CD8-positive, alpha-beta T cell (primary cell): ENCODE measurements at regions of chr18 and their contacts with region 1.

Region 1: GRCh38 chr18:58768293-58768974 is 96.2 kb upstream of the ZNF532 start:
- DNase-seq: peak; percentile 34 to 77 (median 64)
- ATAC-seq: peak; percentile 78
- H3K4me3 ChIP-seq: no peak overlapping the region
- H3K4me3 Mint-ChIP-seq: peak overlapping the region; percentile 57
- H3K27ac ChIP-seq: no peak overlapping the region
- H3K27ac Mint-ChIP-seq: no peak overlapping the region
- H3K4me1 ChIP-seq: peaks cover 13% of the 10 kb centered on the region
- H3K4me1 Mint-ChIP-seq: peaks cover 11% of the 10 kb centered on the region
- H3K27me3 ChIP-seq: peaks cover 0 to 4% of the 10 kb centered on the region in 2 experiments
- H3K27me3 Mint-ChIP-seq: peaks cover 41% of the 10 kb centered on the region
- CTCF ChIP-seq: peak; percentile 42

Region 2: GRCh38 chr18:58493516-58494253 is 274.7 kb before region 1 on chr18:
- CTCF ChIA-PET with region 1: interaction called, 27 read pairs
- POLR2A ChIA-PET with region 1: interaction called, 5 read pairs
- intact Hi-C with region 1: no loop called
- DNase-seq: peak; percentile 26 to 78 (median 66)
- ATAC-seq: peak; percentile 85
- H3K4me3 ChIP-seq: no peak overlapping the region
- H3K4me3 Mint-ChIP-seq: no peak overlapping the region
- H3K27ac ChIP-seq: no peak overlapping the region
- H3K27ac Mint-ChIP-seq: no peak overlapping the region
- H3K4me1 ChIP-seq: no peaks in the 10 kb centered on the region
- H3K4me1 Mint-ChIP-seq: peaks cover 8% of the 10 kb centered on the region
- H3K27me3 ChIP-seq: no peaks in the 10 kb centered on the region
- H3K27me3 Mint-ChIP-seq: peaks cover 32% of the 10 kb centered on the region
- CTCF ChIP-seq: peak; percentile 71

Region 3: GRCh38 chr18:58515175-58515775 is 253.2 kb before region 1 on chr18:
- CTCF ChIA-PET with region 1: interaction called, 21 read pairs
- POLR2A ChIA-PET with region 1: no interaction called
- intact Hi-C with region 1: no loop called
- DNase-seq: peak in 1 of 9 experiments; percentile 32
- ATAC-seq: no peak
- H3K4me3 ChIP-seq: no peak overlapping the region
- H3K4me3 Mint-ChIP-seq: no peak overlapping the region
- H3K27ac ChIP-seq: no peak overlapping the region
- H3K27ac Mint-ChIP-seq: no peak overlapping the region
- H3K4me1 ChIP-seq: no peaks in the 10 kb centered on the region
- H3K4me1 Mint-ChIP-seq: no peaks in the 10 kb centered on the region
- H3K27me3 ChIP-seq: peaks cover 0 to 8% of the 10 kb centered on the region in 2 experiments
- H3K27me3 Mint-ChIP-seq: peaks cover 11% of the 10 kb centered on the region
- CTCF ChIP-seq: no peak

Region 4: DNA sequence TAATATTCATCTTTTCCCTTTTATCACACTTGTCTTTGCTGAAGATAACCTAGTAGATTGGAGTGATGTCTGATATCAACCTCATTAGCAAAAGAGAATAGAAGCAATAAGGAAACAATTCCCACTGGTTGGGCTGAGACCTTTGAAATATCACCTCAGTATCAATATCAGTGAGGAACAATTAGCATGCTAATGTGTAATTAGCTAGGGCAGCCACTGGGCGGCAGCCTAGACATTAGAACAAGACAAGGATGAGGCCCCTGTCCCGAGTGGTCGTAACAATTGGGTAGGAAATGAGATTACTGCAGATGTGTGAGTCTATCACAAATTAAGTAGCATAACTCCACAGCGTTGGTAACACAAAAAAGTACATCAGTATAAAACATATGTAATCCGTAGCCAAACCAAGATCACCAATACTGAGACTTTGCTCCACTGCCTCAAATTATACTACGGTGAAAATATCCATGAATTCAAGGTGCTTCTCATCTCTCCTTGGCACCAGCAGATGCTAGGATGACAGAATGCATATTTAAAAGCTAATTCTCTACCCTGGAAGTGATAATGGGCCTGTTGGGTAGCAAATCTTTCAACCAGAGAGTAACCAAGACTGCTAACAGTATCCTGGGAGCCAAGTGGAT is 238.6 kb before region 1 on chr18:
- CTCF ChIA-PET with region 1: interaction called, 606 read pairs
- POLR2A ChIA-PET with region 1: interaction called, 29 read pairs
- intact Hi-C with region 1: loop called (anchors 1 kb)
- DNase-seq: peak; percentile 40 to 82 (median 72)
- ATAC-seq: peak; percentile 95
- H3K4me3 ChIP-seq: no peak overlapping the region
- H3K4me3 Mint-ChIP-seq: no peak overlapping the region
- H3K27ac ChIP-seq: no peak overlapping the region
- H3K27ac Mint-ChIP-seq: no peak overlapping the region
- H3K4me1 ChIP-seq: no peaks in the 10 kb centered on the region
- H3K4me1 Mint-ChIP-seq: peaks cover 4% of the 10 kb centered on the region
- H3K27me3 ChIP-seq: no peaks in the 10 kb centered on the region
- H3K27me3 Mint-ChIP-seq: peaks cover 7% of the 10 kb centered on the region
- CTCF ChIP-seq: peak; percentile 95

Region 5: GRCh38 chr18:58661423-58661822 is 107.0 kb before region 1 on chr18:
- CTCF ChIA-PET with region 1: interaction called, 11 read pairs
- POLR2A ChIA-PET with region 1: no interaction called
- intact Hi-C with region 1: no loop called
- DNase-seq: no peak
- ATAC-seq: no peak
- H3K4me3 ChIP-seq: no peak overlapping the region
- H3K4me3 Mint-ChIP-seq: no peak overlapping the region
- H3K27ac ChIP-seq: no peak overlapping the region
- H3K27ac Mint-ChIP-seq: no peak overlapping the region
- H3K4me1 ChIP-seq: peaks cover 28% of the 10 kb centered on the region
- H3K4me1 Mint-ChIP-seq: peaks cover 47% of the 10 kb centered on the region
- H3K27me3 ChIP-seq: no peaks in the 10 kb centered on the region
- H3K27me3 Mint-ChIP-seq: no peaks in the 10 kb centered on the region
- CTCF ChIP-seq: no peak

Region 6: DNA sequence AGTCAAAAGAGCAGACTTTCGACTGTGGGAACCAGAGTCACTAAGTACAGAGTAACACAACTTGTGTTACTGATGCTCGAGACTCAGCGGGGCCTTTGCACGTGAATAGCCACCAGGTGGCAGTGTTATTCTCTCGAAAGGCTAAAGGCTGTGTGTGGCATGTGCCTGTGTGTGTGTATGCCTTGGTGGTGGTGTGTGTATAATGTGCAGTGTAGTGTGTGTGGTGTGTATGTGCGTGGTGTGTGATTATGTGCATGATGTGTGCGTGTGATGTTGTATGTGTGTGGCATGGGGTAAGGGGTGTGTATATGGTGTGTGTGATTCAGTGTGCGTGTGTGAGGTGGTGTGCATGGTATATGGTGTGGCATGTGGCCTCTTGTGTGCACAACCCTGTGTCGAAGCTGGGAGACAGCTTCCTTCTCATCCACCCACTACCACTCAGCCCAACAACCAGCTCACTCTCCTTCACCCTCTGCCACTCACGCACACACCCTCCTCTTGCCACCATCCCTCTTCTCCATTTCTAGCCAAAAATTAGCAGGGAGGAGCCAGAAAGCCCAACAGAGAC is 13.3 kb after region 1 on chr18:
- CTCF ChIA-PET with region 1: interaction called, 15 read pairs
- POLR2A ChIA-PET with region 1: no interaction called
- intact Hi-C with region 1: no loop called
- DNase-seq: peak; percentile 25 to 76 (median 59)
- ATAC-seq: peak; percentile 61
- H3K4me3 ChIP-seq: no peak overlapping the region
- H3K4me3 Mint-ChIP-seq: no peak overlapping the region
- H3K27ac ChIP-seq: no peak overlapping the region
- H3K27ac Mint-ChIP-seq: no peak overlapping the region
- H3K4me1 ChIP-seq: no peaks in the 10 kb centered on the region
- H3K4me1 Mint-ChIP-seq: no peaks in the 10 kb centered on the region
- H3K27me3 ChIP-seq: peaks cover 0 to 2% of the 10 kb centered on the region in 2 experiments
- H3K27me3 Mint-ChIP-seq: peaks cover 32% of the 10 kb centered on the region
- CTCF ChIP-seq: peak; percentile 76

Region 7: GRCh38 chr18:58842978-58843687 is 74.7 kb after region 1 on chr18:
- CTCF ChIA-PET with region 1: no interaction called
- POLR2A ChIA-PET with region 1: no interaction called
- intact Hi-C with region 1: no loop called
- DNase-seq: no peak
- ATAC-seq: no peak
- H3K4me3 ChIP-seq: no peak overlapping the region
- H3K4me3 Mint-ChIP-seq: no peak overlapping the region
- H3K27ac ChIP-seq: no peak overlapping the region
- H3K27ac Mint-ChIP-seq: no peak overlapping the region
- H3K4me1 ChIP-seq: no peaks in the 10 kb centered on the region
- H3K4me1 Mint-ChIP-seq: no peaks in the 10 kb centered on the region
- H3K27me3 ChIP-seq: peaks cover 5 to 8% of the 10 kb centered on the region in 2 experiments
- H3K27me3 Mint-ChIP-seq: peaks cover 51% of the 10 kb centered on the region
- CTCF ChIP-seq: no peak